Activated T-helper 2 cell treated with anti-CD3 and anti-CD28 coated beads, Interferon-gamma antibody, Interleukin-2, Interleukin-4, amounts not matched to agents 10 μg/mL and 5 μg/mL and 100 μg/mL, durations not matched to agents 14 hours and 24 hours and 36 hours (primary cell): ENCODE measurements at regions of chr17 and their contacts with region 1.

Region 1: DNA sequence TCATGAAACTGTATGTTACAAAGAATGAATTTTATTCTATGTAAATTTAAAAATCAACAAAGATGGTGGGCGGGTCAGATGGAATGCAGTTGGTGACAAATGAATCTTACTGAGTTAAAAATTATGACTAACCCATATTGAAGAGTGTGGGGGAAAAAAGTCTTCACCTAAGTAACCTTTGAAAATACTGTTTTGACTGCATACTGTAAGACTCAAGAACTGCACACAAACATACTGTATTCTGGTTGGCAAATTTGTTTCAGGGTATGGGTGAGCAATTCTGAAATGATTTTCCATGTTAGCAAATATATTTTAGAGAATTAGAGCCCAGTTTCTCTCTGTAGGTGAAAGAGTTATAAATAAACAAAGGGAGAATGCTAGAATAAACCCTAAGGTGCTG is 153.7 kb upstream of the KCNJ18 start:
- DNase-seq: no peak
- H3K4me3 Mint-ChIP-seq: no peak overlapping the region
- H3K27ac Mint-ChIP-seq: no peak overlapping the region
- H3K4me1 Mint-ChIP-seq: peaks cover 19% of the 10 kb centered on the region
- H3K27me3 Mint-ChIP-seq: no peaks in the 10 kb centered on the region

Region 2: DNA sequence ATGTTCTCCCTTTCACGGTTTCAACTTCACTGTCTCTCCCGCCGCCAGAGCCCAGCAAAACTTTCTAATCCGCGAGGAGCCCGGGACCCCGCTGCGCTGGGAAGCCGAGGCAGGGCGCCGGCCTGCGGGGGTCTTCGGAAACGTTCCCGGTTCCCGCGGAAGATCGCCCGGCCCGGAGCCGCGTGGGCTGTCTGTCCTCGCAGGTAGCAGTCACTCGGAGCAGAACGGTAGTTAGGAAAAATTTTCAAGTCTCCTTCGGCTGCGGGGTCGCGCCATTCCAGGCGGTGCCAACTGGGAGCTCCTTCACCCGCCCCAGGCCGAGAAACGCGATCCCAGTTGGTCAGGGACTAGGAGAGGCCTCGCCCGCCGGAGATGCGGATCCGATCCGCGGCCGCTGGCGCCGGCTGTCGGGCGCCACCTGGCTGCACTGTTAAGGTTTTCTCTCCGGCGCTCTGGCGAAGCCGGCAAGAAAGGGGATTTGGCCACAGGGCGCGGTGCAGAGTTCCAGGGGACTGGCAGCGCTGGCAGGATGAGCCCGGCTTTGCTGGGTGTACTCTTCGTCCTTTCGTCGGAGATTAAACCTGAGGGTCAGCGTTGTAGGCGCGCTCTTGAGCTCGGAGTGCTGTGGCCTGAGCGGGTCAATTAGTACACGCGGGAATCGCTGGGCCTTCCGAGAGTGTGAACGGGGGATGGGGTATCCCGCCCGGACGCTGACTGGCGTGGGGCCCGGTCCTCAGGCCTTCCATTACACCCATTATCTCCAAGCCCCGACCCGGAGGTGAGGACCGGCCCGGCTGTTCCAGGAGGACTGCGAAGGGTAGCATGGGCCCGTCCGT is 27.0 kb before region 1 on chr17:
- intact Hi-C with region 1: no loop called
- DNase-seq: peak; percentile 43
- H3K4me3 Mint-ChIP-seq: peak overlapping the region; percentile 54
- H3K27ac Mint-ChIP-seq: no peak overlapping the region
- H3K4me1 Mint-ChIP-seq: peaks cover 14% of the 10 kb centered on the region
- H3K27me3 Mint-ChIP-seq: peaks cover 57% of the 10 kb centered on the region

Region 3: DNA sequence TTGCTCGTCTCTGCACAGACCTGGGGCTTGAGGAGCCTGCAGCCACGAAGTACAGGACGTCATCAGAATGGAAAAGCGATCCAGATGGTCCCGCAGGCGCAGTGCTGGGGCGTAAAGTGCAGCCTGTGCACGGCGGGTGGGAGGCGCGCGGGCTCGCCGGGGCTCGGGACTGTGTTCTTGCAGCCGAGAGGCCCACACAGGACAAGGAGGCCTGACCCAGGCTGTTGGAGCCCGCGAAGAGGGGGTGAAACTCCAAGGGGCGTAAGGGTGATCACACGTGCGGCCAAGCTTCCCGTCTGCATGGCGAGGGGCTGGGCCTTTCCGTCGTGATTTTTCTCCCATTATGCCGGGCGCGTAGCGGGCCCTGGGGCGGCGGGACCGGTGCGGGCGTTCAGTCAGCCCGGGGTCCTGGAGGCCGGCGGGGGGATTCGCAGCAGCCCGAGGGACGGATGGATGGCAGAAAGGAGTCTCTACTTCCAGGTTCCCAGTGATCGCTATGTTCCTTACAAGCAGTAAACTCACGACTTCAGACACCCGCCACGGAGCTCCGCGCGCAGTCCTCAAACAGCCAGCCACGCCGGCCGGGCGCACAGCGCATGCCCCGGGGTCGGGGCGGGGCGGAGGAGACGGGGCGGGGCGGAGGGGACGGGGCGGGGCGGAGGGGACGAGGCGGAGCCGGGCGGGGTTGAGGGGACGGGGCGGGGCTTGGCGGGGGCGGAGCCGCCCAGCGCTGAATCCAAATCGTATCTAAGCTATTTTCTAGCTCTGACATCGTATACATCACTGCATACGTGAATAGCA is 12.7 kb after region 1 on chr17:
- intact Hi-C with region 1: loop called (anchors 1 kb)
- DNase-seq: peak; percentile 67
- H3K4me3 Mint-ChIP-seq: peak overlapping the region; percentile 71
- H3K27ac Mint-ChIP-seq: no peak overlapping the region
- H3K4me1 Mint-ChIP-seq: peaks cover 28% of the 10 kb centered on the region
- H3K27me3 Mint-ChIP-seq: peaks cover 20% of the 10 kb centered on the region

Region 4: DNA sequence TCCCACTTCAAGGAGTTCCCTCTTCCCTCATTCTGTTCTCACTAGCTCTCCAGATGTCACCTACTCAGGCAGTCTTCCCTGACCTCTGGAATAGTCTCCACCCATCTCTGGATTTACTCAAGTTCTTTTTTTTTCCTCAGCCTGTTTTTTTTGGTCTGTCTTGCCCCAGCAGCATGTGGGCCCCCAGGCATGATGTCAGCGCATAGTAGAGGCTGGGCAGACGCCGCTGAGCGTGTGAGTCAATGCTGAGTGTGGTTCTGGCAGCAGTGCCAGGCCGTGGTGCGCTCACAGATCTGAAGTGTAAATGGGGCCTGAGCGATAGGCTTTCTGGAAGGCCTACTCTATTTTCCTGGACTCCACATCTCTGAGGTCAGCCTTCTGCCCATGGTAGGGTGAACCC is 151.0 kb after region 1 on chr17:
- intact Hi-C with region 1: no loop called
- DNase-seq: no peak
- H3K4me3 Mint-ChIP-seq: no peak overlapping the region
- H3K27ac Mint-ChIP-seq: no peak overlapping the region
- H3K4me1 Mint-ChIP-seq: no peaks in the 10 kb centered on the region
- H3K27me3 Mint-ChIP-seq: no peaks in the 10 kb centered on the region